Endothelial cell of umbilical vein (primary cell): ENCODE measurements at regions of chrX and their contacts with region 1.

Region 1: DNA sequence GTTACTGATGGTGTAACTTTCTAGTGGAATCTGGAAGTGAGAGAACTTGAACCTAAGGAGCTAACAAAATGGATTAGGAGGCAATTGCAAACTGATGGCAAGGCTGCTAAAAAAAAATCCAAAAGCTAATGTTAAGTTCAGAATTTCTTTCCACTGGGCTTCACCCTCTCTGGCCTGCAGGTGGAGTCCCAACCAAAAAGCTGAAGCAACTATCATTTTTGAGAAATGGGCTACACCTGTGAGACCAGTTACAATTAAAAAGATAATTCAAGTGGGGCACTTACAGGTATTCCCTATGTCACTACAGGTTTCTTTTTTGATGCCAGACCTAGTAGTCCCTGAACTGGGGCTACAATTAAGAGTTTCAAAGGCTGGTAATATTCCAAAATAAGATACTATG is 142.1 kb upstream of the FTHL17 start:
- DNase-seq: peak; percentile 19
- H3K4me3 ChIP-seq: no peak overlapping the region
- H3K27ac ChIP-seq: no peak overlapping the region
- H3K4me1 ChIP-seq: peaks cover 20% of the 10 kb centered on the region
- H3K27me3 ChIP-seq: no peaks in the 10 kb centered on the region
- CTCF ChIP-seq: peak; percentile 19 to 40
- POLR2A ChIP-seq: no peak

Region 2: DNA sequence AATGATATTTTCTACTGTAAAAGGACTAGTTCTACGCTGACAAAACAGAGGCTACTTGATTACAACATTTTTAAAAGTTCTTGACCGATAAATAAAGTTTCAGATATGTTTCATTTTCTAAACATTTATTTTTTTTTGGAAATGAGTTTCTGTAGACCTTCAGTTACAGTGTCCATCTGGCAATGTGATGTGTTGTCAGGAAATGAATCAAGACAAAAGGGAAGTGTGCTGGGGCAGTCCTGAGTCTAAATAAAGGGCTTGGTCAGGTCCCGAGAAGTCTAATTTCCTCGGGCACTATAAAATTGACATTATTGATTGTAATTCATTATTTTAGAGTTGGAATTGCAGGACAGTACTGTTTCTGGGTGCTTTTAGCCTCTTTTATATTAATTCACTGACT is 85.1 kb before region 1 on chrX:
- CTCF ChIA-PET with region 1: no interaction called
- POLR2A ChIA-PET with region 1: no interaction called
- dilution Hi-C with region 1: no loop called
- intact Hi-C with region 1: loop called (anchors 2 kb)
- DNase-seq: peak; percentile 53
- H3K4me3 ChIP-seq: peak overlapping the region in 1 of 3 experiments; percentile 17
- H3K27ac ChIP-seq: peak overlapping the region; percentile 51
- H3K4me1 ChIP-seq: peaks cover 9% of the 10 kb centered on the region
- H3K27me3 ChIP-seq: no peaks in the 10 kb centered on the region
- CTCF ChIP-seq: no peak
- POLR2A ChIP-seq: no peak

Region 3: DNA sequence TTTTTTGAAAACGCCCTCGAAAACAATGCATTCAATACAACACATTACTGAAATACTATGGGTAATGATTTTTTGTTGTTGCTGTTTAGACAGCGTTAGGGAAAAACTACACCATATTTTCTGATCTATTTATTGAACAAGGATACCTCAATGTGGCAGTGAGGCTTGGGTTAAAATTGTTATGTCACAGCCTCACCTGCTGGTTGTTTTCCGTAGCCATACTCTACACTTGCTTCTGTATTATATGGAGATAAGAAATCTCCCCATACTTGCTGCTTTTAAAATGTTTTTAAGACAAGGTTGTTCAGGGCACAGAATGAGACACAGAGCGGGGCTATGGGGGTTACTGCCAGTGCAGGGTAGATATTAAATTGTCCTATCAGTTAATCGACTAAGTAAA is 79.5 kb after region 1 on chrX:
- CTCF ChIA-PET with region 1: interaction called, 13 read pairs
- POLR2A ChIA-PET with region 1: no interaction called
- dilution Hi-C with region 1: no loop called
- intact Hi-C with region 1: no loop called
- DNase-seq: peak; percentile 13
- H3K4me3 ChIP-seq: no peak overlapping the region
- H3K27ac ChIP-seq: no peak overlapping the region
- H3K4me1 ChIP-seq: no peaks in the 10 kb centered on the region
- H3K27me3 ChIP-seq: no peaks in the 10 kb centered on the region
- CTCF ChIP-seq: peak in 1 of 2 donors; percentile 16
- POLR2A ChIP-seq: no peak

Region 4: DNA sequence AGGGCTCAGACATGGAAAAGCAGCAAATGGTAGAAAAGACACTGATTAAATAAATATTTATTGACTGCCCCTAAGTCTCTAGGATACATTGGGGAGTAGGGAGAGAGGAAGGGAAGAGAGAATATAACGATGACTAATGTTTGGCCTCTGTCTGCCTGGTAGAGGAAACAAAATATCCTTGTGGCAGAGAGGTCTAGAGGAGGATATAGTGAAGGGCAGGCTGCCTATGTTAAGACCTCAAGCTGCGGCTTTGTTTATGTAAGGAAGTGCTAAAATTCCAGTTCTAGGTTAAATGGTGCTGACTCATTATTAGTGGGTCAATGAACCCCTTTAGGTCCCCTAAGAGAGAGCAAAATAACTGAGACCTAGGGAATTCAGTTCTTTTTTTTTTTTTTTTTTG is 285.2 kb after region 1 on chrX:
- CTCF ChIA-PET with region 1: no interaction called
- POLR2A ChIA-PET with region 1: no interaction called
- dilution Hi-C with region 1: no loop called
- intact Hi-C with region 1: loop called (anchors 2 kb)
- DNase-seq: peak; percentile 85
- H3K4me3 ChIP-seq: no peak overlapping the region
- H3K27ac ChIP-seq: peak overlapping the region; percentile 53
- H3K4me1 ChIP-seq: peaks cover 22% of the 10 kb centered on the region
- H3K27me3 ChIP-seq: no peaks in the 10 kb centered on the region
- CTCF ChIP-seq: no peak
- POLR2A ChIP-seq: peak; percentile 41